Uterus (tissue), 4 donors: ENCODE measurements at regions of chrX and their contacts with region 1.

Region 1: DNA sequence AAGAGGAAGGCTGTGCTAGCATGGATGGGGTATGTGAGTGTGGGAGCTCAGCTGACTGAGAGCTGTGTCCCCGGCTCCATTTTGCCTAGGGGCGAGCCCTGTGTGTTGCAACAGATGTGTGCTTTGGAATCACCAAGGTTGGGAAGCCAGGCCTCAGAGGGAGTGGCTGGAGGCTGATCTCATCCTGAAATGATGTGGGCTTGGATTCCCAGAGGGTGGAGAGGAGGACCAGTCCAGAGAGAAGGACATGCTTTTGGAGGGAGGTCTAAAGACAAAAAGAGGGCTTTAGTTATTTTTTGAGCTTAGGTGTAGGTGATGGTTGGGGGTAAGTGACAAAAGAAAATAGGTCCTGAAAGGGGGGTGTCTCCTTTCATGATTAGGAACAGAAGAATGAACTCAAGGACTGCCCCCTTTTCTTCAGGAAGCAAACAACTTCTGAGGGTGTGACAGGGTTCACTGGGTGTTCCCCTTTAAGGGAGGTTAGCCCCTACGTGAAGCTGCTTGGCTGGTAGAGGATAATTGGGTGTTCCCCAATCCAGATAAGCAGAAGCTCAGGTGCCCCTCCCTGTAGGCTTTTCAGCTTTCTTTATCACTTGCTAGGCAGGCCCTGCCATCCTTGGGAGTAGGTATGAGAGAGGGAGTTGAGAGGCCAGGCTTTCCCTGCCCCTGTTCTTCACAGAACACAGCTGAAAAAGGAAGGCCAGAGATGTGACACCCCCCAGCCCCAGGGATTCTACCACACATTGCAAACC is 44.0 kb downstream of the RTL9 start:
- DNase-seq: peak; percentile 22 to 36
- H3K4me3 ChIP-seq: no peak overlapping the region
- H3K27ac ChIP-seq: peak overlapping the region in 1 of 2 donors; percentile 39
- H3K4me1 ChIP-seq: no peaks in the 10 kb centered on the region
- H3K27me3 ChIP-seq: no peaks in the 10 kb centered on the region
- CTCF ChIP-seq: no peak
- POLR2A ChIP-seq: no peak

Region 2: DNA sequence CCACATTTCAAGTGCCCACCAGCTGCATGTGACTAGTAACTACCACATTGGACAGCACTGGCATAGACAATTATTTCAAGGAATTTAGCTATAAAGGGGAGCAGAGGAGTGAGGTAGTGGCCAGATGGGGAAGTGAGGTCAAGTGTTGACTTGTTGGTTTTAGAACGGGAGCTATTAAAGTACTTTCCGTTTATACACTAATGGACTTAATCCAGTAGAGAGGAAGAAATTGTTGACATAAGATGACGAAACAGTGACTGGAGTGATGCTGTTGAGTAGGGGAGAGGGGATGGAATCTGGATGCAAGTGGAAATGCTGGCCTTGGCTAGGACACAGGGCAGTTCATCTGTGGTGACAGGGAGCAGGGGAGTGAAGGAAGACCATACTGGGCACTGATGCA is 239.2 kb before region 1 on chrX:
- intact Hi-C with region 1: loop called (anchors 5 kb)
- DNase-seq: no peak
- H3K4me3 ChIP-seq: no peak overlapping the region
- H3K27ac ChIP-seq: no peak overlapping the region
- H3K4me1 ChIP-seq: no peaks in the 10 kb centered on the region
- H3K27me3 ChIP-seq: no peaks in the 10 kb centered on the region
- CTCF ChIP-seq: no peak
- POLR2A ChIP-seq: no peak

Region 3: DNA sequence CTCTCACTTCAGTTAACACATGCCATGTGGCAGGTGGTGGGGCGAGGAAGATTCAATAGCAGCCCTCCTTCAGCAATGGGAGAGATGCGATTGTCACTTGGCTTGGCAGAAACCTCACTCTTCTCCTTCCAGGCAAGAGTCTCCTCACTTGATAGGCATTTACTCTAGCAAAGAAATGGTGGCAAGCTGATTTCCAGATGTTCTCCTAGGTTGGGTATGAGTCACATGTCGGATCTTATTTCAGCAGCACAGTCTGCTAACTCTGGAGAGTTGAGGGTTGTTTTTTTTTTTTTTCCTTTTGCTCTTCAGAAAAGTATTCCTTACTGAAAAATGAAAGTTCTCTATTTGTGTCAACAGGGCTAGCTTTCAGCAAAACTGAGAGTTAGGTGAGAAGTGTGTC is 512.5 kb after region 1 on chrX:
- intact Hi-C with region 1: no loop called
- DNase-seq: no peak
- H3K4me3 ChIP-seq: no peak overlapping the region
- H3K27ac ChIP-seq: no peak overlapping the region
- H3K4me1 ChIP-seq: no peaks in the 10 kb centered on the region
- H3K27me3 ChIP-seq: no peaks in the 10 kb centered on the region
- CTCF ChIP-seq: no peak
- POLR2A ChIP-seq: no peak